Activated CD8-positive, alpha-beta T cell treated with anti-CD3 and anti-CD28 coated beads for 36 hours (primary cell): ENCODE measurements at regions of chr21 and their contacts with region 1.

Region 1: GRCh38 chr21:28943631-28944030 is 49.0 kb downstream of the LTN1 start:
- DNase-seq: no peak
- ATAC-seq: no peak
- H3K4me3 Mint-ChIP-seq: no peak overlapping the region
- H3K27ac Mint-ChIP-seq: peak overlapping the region; percentile 55
- H3K4me1 Mint-ChIP-seq: no peaks in the 10 kb centered on the region
- H3K27me3 Mint-ChIP-seq: no peaks in the 10 kb centered on the region
- CTCF ChIP-seq: no peak

Region 2: DNA sequence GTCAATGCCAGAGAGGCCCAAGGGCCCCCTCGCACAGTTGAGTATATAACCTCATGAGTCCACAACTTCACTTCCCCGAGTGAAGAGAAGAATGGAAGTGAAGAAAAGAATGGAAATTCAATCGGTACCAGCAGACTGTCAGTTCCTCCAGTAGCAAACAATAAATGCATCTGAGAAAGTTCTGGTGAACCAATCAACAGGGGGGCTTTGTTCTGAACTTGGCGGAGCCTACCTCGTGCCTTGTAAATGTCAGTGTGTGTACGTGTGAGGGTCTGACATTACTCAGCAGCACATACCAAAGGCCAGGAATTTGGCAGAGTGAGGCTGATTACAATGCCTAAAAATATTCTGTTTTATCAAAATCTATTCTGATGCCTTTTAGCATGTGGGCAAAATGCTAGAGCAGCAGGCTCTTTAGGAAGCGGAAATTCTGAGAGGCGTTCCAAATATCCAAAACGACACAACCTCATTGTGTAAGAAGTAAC is 189.5 kb before region 1 on chr21:
- CTCF ChIA-PET with region 1: interaction called, 3 read pairs
- POLR2A ChIA-PET with region 1: no interaction called
- intact Hi-C with region 1: loop called (anchors 10 kb)
- DNase-seq: no peak
- ATAC-seq: no peak
- H3K4me3 Mint-ChIP-seq: no peak overlapping the region
- H3K27ac Mint-ChIP-seq: no peak overlapping the region
- H3K4me1 Mint-ChIP-seq: no peaks in the 10 kb centered on the region
- H3K27me3 Mint-ChIP-seq: no peaks in the 10 kb centered on the region
- CTCF ChIP-seq: no peak

Region 3: DNA sequence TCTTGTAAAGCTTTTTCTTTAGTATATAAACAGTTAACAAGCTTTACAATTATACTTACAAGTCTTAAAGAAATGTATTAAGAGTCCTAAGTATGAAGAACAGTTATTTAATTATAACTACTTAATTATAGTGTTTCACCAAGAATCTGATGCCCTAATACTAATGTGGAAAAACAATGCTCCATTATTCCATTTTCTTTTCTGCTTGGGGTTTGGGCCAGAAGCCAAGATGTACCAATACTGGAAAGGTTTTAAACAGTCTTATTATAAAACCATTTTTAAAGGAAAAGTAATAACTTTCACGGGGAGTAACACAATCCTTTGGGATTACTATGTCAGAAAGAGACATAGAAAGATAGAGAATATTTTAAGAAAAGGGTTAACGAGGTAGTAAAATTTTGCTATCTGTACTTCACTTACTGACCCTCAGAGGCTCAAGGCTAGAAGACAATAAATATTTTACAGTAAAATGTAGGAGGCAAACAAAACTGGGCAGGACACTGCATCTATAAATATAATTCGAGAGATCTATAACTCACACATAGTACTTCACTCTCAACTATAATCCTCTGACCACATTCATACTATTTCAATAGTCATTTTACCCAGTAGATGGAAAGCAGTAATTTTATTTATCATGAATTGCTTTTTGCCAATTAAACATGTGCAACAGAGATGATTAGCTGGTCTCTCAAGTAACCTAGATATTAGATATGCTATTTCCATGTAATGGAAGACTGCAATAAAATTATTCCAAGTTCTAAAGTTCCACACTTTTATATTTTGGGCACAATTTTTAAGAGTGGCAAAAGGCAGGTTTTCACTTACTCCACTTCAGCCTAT is 14.8 kb before region 1 on chr21:
- CTCF ChIA-PET with region 1: interaction called, 12 read pairs
- POLR2A ChIA-PET with region 1: no interaction called
- intact Hi-C with region 1: no loop called
- DNase-seq: no peak
- ATAC-seq: no peak
- H3K4me3 Mint-ChIP-seq: no peak overlapping the region
- H3K27ac Mint-ChIP-seq: no peak overlapping the region
- H3K4me1 Mint-ChIP-seq: no peaks in the 10 kb centered on the region
- H3K27me3 Mint-ChIP-seq: no peaks in the 10 kb centered on the region
- CTCF ChIP-seq: no peak